CD4-positive, alpha-beta memory T cell (primary cell): ENCODE measurements at regions of chr2 and their contacts with region 1.

Region 1: DNA sequence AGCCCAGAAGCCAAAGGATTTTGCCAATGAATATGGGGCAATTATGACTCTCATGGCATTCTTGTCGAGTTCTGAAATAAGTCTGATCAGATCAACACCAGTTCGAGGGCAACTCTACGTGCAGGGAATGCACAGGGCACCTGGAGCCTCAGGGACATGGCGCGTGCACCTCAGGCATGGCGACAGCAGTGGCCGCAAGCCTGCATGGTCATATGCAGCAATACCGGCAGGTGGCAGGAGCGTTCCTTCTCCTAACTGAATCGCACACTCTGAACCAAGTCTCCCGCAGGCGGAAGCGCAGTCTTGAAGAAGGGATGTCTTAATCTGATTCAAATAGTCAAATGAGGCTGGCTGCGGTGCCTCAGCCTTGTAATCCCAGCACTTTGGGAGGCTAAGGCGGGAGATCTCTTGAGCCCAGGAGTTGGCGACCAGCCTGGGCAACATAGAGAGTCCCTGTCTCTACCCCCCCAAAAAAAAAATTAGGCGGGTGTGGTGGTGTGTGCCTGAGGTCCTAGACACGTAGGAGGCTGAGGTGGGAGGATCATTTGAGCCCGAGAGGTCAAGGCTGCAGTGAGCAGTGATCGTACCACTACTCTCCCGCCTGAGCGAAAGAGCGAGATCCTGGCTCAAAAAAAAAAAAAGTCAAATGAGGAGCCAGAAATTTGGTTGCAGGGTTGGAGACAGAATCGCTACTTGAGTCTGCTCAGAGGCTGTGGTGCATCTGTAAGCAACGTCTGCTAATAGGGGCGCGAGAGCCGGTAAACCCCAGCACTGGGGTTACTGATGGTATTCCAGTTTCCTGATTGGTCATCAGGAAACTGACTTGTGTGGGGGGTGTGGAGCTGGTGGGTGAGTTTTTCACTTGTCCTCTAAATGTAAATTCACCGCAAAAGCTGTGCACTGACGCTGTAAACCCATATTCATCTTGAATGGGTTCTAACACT is 28.8 kb downstream of the FHL2 start:
- DNase-seq: peak; percentile 77 to 85 (median 82)
- H3K4me3 ChIP-seq: no peak overlapping the region
- H3K4me3 Mint-ChIP-seq: peak overlapping the region in 7 of 8 donors; percentile 0 to 65 (median 16)
- H3K27ac ChIP-seq: no peak overlapping the region
- H3K27ac Mint-ChIP-seq: peak overlapping the region in 5 of 7 donors; percentile 14 to 68 (median 25)
- H3K4me1 ChIP-seq: peaks cover 27% of the 10 kb centered on the region
- H3K4me1 Mint-ChIP-seq: peaks cover 15 to 27% (median 25%) of the 10 kb centered on the region in 4 donors
- H3K27me3 ChIP-seq: no peaks in the 10 kb centered on the region
- H3K27me3 Mint-ChIP-seq: no peaks in the 10 kb centered on the region

Region 2: DNA sequence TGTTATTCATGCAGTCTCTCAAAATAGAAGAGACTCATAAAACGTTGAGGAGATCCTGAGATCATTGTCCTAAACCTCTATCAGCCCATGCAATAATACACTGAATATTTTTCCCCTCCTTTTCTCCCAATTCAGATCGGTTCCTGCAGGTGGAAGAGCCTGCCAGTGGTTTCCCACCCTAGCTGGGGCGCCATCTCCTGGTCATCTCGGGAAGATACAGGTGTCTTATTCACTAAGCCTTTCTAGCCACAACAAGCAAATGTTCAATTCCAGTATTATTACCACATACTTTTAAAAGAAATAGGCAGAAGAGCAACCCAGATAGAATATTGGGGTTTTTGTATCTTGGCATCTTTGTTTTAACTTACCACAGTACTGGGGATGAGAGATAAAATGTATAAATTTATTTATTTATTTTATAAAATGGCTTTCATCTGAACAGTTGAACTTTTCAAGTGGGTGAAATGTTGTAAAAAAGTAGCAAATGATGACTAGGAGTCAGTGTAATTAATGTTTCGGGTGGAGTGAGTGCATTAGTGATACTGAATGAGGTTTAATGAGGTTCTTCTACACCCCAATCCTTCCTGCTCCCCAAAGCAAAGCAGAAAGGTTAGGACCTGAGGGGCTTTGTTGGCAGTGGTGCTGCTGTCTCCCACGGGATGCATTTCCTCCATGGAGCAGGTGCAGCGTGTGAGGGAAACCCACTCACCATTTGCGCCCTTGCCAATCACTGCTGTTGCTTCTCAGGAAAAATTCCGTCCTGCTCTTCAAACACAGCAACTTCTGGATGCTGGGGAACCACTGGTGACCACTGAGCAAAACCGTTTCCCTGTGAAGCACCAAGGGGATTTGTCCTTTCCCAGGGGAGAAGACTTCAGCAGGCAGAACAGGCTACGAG is 176.0 kb after region 1 on chr2:
- CTCF ChIA-PET with region 1: interaction called, 41 read pairs
- POLR2A ChIA-PET with region 1: no interaction called
- intact Hi-C with region 1: loop called (anchors 1 kb)
- DNase-seq: peak; percentile 54 to 59 (median 55)
- H3K4me3 ChIP-seq: no peak overlapping the region
- H3K4me3 Mint-ChIP-seq: peak overlapping the region; percentile 42 to 66 (median 55)
- H3K27ac ChIP-seq: peak overlapping the region; percentile 15
- H3K27ac Mint-ChIP-seq: peak overlapping the region in 3 of 7 donors; percentile 3 to 18 (median 11)
- H3K4me1 ChIP-seq: peaks cover 12% of the 10 kb centered on the region
- H3K4me1 Mint-ChIP-seq: peaks cover 9 to 15% (median 13%) of the 10 kb centered on the region in 4 donors
- H3K27me3 ChIP-seq: no peaks in the 10 kb centered on the region
- H3K27me3 Mint-ChIP-seq: peaks cover 0 to 3% of the 10 kb centered on the region in 2 donors